ENCODE measurements at regions of chr9 and their contacts with region 1.

Region 1: GRCh38 chr9:137302176-137302994 is at the start of gene NRARP:
- ATAC-seq: peak; percentile 57 to 71 (median 61)
- H3K4me3 ChIP-seq: peak within 1 kb of the TSS; percentile 52 to 75 (median 55)
- H3K27ac ChIP-seq: peak within 1 kb of the TSS; percentile 6 to 45
- H3K4me1 ChIP-seq: peaks cover 48 to 59% of the 10 kb centered on the region in 2 donors
- total RNA-seq, gene NRARP: 1.00 to 20.5 (median 3.4) TPM in 7 of 8 experiments, not detected in the other

Region 2: DNA sequence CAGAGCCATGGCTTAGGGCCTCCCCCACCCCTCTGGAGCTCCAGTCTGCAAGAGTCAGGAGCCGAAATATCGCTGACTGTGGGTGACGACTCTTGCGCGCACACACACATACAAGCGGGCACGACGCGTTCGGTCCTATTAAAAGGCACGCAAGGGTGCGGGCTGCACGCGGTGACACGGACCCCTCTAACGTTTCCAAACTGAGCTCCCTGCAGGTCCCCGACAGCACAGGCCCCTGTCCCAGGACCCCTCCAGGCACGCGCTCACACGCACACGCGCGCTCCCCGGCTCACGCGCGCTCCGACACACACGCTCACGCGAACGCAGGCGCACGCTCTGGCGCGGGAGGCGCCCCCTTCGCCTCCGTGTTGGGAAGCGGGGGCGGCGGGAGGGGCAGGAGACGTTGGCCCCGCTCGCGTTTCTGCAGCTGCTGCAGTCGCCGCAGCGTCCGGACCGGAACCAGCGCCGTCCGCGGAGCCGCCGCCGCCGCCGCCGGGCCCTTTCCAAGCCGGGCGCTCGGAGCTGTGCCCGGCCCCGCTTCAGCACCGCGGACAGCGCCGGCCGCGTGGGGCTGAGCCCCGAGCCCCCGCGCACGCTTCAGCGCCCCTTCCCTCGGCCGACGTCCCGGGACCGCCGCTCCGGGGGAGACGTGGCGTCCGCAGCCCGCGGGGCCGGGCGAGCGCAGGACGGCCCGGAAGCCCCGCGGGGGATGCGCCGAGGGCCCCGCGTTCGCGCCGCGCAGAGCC is 163.5 kb before region 1 on chr9 and contains the start of gene GRIN1:
- in situ Hi-C with region 1: no loop called
- ATAC-seq: peak; percentile 18 to 92 (median 38)
- H3K4me3 ChIP-seq: peak within 1 kb of the TSS; percentile 12 to 37 (median 23)
- H3K27ac ChIP-seq: peak within 1 kb of the TSS in 1 of 2 donors; percentile 59
- H3K4me1 ChIP-seq: peaks cover 10 to 12% of the 10 kb centered on the region in 2 donors
- total RNA-seq, gene GRIN1: 0.20 to 6.0 (median 1.2) TPM

Region 3: GRCh38 chr9:137423004-137423874 is 120.9 kb after region 1 on chr9 and contains the starts of genes EXD3 and NOXA1:
- in situ Hi-C with region 1: loop called in 7 of 9 experiments (anchors 25 kb)
- ATAC-seq: peak; percentile 72 to 87 (median 84)
- H3K4me3 ChIP-seq: peak within 1 kb of the TSS; percentile 51 to 98 (median 78)
- H3K27ac ChIP-seq: no peak within 1 kb of the TSS
- H3K4me1 ChIP-seq: peaks cover 6 to 10% of the 10 kb centered on the region in 2 donors
- total RNA-seq, gene EXD3: 3.2 to 14.8 (median 9.6) TPM
- total RNA-seq, gene NOXA1: 0.13 to 2.1 (median 0.32) TPM

Region 4: GRCh38 chr9:137549875-137550601 is 247.7 kb after region 1 on chr9 and contains the start of gene PNPLA7:
- in situ Hi-C with region 1: loop called in 1 of 9 experiments (anchors 25 kb)
- ATAC-seq: peak; percentile 56 to 65 (median 60)
- H3K4me3 ChIP-seq: peak within 1 kb of the TSS; percentile 64 to 95 (median 79)
- H3K27ac ChIP-seq: peak within 1 kb of the TSS; percentile 84 to 90
- H3K4me1 ChIP-seq: peaks cover 4 to 5% of the 10 kb centered on the region in 2 donors
- total RNA-seq, gene PNPLA7: 0.16 to 3.3 (median 1.5) TPM

Measured in motor neuron (in vitro differentiated cells).